ENCODE measurements at regions of chr5 and their contacts with region 1.

Region 1: DNA sequence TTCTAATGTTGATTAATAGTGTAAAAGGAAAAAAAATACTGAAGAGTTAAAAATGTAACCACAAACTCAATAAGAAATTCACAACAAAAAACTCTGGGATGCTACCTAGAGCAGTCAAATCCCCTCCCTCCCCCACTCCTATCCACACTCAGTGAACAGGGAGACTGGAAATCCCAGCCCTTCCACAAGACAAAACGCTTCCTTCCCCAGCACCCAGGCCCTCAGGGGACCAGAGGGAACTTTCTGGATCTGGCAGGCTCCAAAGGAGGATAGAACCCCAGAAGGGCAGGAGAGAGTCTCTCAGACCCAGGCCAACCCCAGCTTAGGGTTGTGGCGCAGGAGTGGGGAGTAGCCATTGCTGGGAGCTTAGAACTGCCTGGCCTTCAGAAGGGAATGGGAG is 55.0 kb downstream of the DCP2 start:
- DNase-seq: no peak
- ATAC-seq: no peak
- H3K4me3 ChIP-seq: no peak overlapping the region
- H3K27ac ChIP-seq: no peak overlapping the region
- H3K4me1 ChIP-seq: no peaks in the 10 kb centered on the region
- H3K27me3 ChIP-seq: no peaks in the 10 kb centered on the region
- CTCF ChIP-seq: no peak

Region 2: DNA sequence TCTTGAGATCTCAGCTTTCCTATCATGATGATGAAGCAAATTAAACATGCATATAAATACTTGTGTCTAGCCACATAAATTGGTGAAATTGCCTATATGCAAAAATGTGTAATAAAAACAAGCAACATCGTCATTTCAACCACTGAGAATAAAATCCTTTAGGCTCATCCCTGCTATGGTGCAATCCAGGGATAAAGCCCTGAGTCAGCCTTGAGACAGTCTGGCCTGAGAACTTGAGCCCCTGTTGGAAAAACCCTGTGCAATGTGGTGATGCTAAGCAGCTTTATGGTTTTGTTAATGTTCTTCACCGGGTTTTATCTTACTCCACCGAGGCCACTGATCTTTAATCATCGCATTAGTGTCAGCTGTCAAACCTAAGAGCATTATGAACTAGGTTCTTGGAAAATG is 115.5 kb after region 1 on chr5:
- CTCF ChIA-PET with region 1: no interaction called
- POLR2A ChIA-PET with region 1: no interaction called
- in situ Hi-C with region 1: no loop called
- intact Hi-C with region 1: no loop called
- DNase-seq: no peak
- ATAC-seq: no peak
- H3K4me3 ChIP-seq: no peak overlapping the region
- H3K27ac ChIP-seq: no peak overlapping the region
- H3K4me1 ChIP-seq: no peaks in the 10 kb centered on the region
- H3K27me3 ChIP-seq: peaks cover 8% of the 10 kb centered on the region
- CTCF ChIP-seq: no peak

Region 3: DNA sequence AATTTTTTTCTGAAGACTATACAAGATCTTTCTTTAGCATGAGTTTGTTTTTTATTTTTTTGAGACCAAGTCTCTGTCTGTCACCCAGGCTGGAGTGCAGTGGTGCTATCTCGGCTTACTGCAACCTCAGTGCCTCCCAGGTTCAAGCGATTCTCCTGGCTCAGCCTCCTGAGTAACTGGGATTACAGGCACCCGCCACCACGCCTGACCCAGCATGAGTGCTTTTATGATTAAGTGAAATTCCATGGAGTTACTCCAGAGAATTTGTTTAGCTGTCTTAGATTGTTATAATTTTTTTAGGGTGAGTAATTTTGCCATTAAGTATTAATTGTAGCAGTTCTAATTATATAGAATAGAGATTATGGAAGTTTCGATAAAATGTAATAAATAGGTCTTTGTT is 496.2 kb after region 1 on chr5:
- CTCF ChIA-PET with region 1: interaction called, 11 read pairs
- POLR2A ChIA-PET with region 1: no interaction called
- in situ Hi-C with region 1: no loop called
- intact Hi-C with region 1: no loop called
- DNase-seq: no peak
- ATAC-seq: no peak
- H3K4me3 ChIP-seq: no peak overlapping the region
- H3K27ac ChIP-seq: no peak overlapping the region
- H3K4me1 ChIP-seq: no peaks in the 10 kb centered on the region
- H3K27me3 ChIP-seq: no peaks in the 10 kb centered on the region
- CTCF ChIP-seq: no peak

Measured in Panc1 (cell line).